Activated naive CD4-positive, alpha-beta T cell treated with anti-CD3 and anti-CD28 coated beads, Interleukin-2, amount 10 ng/mL, durations not matched to agents 7 days and 5 days (primary cell): ENCODE measurements at regions of chr14 and their contacts with region 1.

Region 1: GRCh38 chr14:93970549-93970946 is 5.8 kb downstream of the ASB2 start:
- DNase-seq: peak; percentile 78
- H3K4me3 Mint-ChIP-seq: peak overlapping the region; percentile 78
- H3K27ac Mint-ChIP-seq: peak overlapping the region; percentile 97
- H3K4me1 Mint-ChIP-seq: peaks cover 98% of the 10 kb centered on the region
- H3K27me3 Mint-ChIP-seq: no peaks in the 10 kb centered on the region

Region 2: GRCh38 chr14:93870377-93870776 is 100.2 kb before region 1 on chr14:
- CTCF ChIA-PET with region 1: no interaction called
- DNase-seq: no peak
- H3K4me3 Mint-ChIP-seq: no peak overlapping the region
- H3K27ac Mint-ChIP-seq: no peak overlapping the region
- H3K4me1 Mint-ChIP-seq: no peaks in the 10 kb centered on the region
- H3K27me3 Mint-ChIP-seq: peaks cover 41% of the 10 kb centered on the region

Region 3: DNA sequence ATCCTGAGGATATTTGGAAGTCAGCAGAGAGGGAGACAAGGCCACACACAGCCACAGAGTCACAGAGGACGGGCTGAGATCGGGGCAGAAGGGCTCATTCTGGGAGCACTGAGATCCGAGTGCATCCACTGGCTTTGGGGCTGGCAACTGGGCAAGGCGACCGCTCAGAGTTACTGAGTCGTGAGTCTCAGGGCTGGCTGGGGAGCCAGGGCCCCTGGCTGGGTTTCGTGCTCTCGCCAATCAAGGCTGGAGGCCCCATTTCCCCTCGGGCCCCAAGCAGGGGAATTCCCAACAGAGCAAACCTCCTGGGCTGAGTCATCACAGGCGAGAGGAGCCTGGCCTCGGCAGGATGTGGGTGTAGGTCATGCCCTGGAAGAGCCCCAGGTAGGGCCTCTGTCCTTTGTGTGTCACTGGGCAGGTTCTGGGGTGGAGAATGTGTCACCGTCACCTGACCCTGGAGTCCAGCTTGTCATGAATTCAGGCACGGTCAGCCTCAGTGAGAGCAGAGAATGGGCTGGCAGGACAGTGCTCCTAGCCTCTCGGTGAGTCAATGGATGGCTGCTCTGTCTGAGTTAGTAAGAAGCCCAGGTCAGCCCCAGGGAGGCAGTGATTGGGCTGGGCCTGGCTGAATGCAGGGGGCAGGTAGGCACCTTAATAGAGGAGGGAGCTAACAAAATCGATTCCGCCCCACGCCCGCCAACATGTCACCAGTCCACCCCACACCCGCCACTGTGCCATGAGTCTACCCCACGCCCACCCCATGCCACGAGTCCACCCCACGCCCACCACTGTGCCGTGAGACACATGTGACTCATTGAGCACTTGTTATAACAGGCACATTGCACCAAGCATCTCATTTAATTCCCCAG is 11.1 kb before region 1 on chr14:
- CTCF ChIA-PET with region 1: interaction called, 181 read pairs
- DNase-seq: peak; percentile 95
- H3K4me3 Mint-ChIP-seq: peak overlapping the region; percentile 58
- H3K27ac Mint-ChIP-seq: peak overlapping the region; percentile 96
- H3K4me1 Mint-ChIP-seq: peaks cover 97% of the 10 kb centered on the region
- H3K27me3 Mint-ChIP-seq: peaks cover 4% of the 10 kb centered on the region

Region 4: DNA sequence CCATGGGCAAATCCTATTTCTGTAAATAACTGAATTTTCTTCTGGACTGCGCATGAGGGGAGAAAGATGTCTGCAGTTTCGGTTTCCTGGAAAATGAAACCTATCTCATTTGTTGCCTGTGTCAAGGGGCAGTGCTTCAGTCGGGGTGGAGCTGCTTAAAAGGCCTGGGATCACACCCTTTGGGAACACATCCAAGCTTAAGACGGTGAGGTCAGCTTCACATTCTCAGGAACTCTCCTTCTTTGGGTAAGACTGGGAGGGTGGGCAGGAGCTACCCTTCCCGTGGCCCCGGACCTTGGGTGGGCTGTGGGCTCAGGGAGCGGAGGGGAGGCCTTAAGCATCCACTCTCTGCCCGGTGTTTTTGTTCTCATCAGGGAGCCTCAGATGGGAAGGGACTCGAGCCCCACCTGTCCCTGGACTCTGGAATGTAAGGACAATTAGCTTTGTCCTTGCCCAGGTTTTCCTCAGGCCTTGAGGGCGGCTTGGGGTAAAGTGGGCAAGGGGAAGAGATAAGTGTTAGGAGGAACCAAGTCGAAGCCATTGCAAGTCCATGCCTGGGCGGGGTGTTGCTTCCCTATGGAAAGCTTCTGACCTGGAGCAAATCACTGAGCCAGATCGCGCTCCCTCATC is 140.1 kb after region 1 on chr14 and contains the start of gene IFI27:
- CTCF ChIA-PET with region 1: no interaction called
- DNase-seq: no peak
- H3K4me3 Mint-ChIP-seq: no peak within 1 kb of the TSS
- H3K27ac Mint-ChIP-seq: no peak within 1 kb of the TSS
- H3K4me1 Mint-ChIP-seq: peaks cover 15% of the 10 kb centered on the region
- H3K27me3 Mint-ChIP-seq: peaks cover 22% of the 10 kb centered on the region

Region 5: DNA sequence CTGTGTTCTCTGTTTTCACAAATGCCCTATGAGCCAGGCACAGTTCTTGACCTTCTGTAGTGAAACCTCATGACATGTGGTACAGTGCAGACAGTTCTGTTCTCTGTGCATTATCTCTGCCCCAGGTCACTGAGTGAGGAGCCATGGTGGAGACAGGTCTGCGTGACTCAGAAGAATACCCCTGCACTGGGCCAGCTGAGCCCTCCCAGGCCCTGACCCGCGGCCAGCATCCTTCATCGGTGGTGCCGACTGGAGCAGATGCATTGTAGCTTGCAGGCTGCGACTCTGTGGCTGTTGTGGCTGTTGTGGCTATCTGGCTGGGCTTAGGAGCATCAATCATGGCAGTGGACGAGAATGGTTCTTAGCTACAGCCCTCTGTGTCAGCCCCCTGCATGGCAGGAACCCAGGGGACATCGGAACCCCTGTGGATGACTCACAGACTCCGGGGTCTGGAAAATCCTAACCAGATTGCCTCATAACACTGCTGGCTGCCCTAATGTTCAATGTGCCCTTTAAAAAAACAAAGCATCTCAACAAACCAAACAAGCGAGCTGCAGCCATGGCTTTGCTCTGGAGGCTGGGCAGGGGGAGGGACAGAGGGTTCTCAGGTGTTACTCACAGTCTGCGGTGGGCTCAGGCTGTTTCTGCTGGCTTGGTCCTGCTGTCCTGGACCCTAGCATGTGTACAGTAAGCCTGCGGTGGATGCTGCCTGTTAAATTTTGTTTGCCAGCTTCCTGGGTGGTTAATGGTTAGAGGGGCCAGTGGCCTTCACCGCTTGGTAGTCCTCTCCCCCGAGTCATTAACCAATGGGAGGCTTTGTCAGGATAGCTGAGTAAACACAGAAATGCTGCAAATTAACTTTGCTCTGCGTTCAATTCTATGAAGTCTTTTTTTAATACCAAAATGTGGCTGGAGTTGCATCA is 352.4 kb after region 1 on chr14 and contains the start of gene SERPINA6:
- CTCF ChIA-PET with region 1: no interaction called
- DNase-seq: no peak
- H3K4me3 Mint-ChIP-seq: no peak within 1 kb of the TSS
- H3K27ac Mint-ChIP-seq: peak within 1 kb of the TSS; percentile 9
- H3K4me1 Mint-ChIP-seq: no peaks in the 10 kb centered on the region
- H3K27me3 Mint-ChIP-seq: peaks cover 24% of the 10 kb centered on the region